ENCODE measurements at regions of chr10 and their contacts with region 1.

Region 1: GRCh38 chr10:96708456-96708855 is 11.9 kb downstream of the PIK3AP1 start:
- DNase-seq: peak; percentile 64
- CTCF ChIP-seq: no peak

Region 2: DNA sequence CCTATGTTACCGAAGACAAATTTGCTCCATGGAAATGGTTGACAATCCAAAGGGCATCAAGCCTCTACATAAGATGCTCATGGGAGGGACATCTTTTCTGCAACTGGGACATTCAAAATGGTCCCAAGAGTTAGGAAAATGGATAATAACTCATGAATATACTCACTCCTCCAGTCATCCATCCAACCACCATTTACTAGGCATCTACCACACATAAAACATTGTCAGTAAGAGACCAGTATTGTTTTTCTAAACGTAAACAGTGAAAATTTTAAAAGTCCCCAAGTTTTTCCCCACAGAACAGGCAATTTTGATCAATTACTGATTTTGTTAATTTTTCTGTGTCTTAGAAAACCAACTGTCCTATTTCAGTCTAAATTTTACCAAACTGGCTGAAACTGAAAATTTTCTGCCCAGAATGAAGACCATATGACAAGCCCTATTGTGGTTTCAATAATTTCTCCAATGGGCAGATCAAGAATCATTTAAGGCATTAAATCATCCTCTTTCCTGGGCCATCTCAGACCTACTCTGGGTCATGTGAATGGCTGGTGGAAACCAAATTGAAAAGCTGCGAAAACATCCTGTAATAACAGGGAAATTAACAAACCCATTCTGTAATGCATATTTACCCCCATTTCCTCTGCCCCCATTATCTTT is 12.4 kb before region 1 on chr10:
- CTCF ChIA-PET with region 1: interaction called, 10 read pairs
- POLR2A ChIA-PET with region 1: interaction called, 3 read pairs
- DNase-seq: no peak
- CTCF ChIP-seq: no peak

Region 3: GRCh38 chr10:96719850-96720421 is 11.5 kb after region 1 on chr10:
- CTCF ChIA-PET with region 1: interaction called, 27 read pairs
- POLR2A ChIA-PET with region 1: no interaction called
- DNase-seq: peak; percentile 80
- CTCF ChIP-seq: peak; percentile 96

Region 4: GRCh38 chr10:96740579-96741281 is 32.3 kb after region 1 on chr10:
- CTCF ChIA-PET with region 1: interaction called, 6 read pairs
- POLR2A ChIA-PET with region 1: interaction called, 13 read pairs
- DNase-seq: no peak
- CTCF ChIP-seq: no peak

Region 5: GRCh38 chr10:96787801-96788200 is 79.3 kb after region 1 on chr10:
- CTCF ChIA-PET with region 1: no interaction called
- POLR2A ChIA-PET with region 1: no interaction called
- DNase-seq: no peak
- CTCF ChIP-seq: no peak

Region 6: DNA sequence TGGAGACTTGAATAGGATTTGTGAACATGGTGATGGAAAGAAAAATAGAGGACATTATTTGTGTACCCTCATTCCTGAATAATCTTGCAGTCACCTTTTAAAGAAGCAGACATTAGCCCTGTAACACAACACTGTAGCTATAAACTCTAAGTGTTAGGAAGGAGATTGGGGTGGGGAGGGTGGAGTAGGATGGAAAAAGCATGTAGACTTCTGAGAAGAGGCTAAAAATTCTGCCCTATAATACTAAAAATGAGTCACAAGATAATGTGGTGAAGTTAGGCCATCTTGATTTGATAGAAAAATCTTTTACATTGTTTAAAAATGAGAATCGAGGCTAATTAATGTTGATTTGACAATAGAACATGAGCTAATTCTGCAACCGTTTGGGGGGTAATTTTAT is 252.4 kb after region 1 on chr10:
- CTCF ChIA-PET with region 1: no interaction called
- POLR2A ChIA-PET with region 1: no interaction called
- DNase-seq: no peak
- CTCF ChIP-seq: no peak